Activated B cell treated with CpG ODN at 0.5 μM for 24 hours (primary cell): ENCODE measurements at regions of chr15 and their contacts with region 1.

Region 1: DNA sequence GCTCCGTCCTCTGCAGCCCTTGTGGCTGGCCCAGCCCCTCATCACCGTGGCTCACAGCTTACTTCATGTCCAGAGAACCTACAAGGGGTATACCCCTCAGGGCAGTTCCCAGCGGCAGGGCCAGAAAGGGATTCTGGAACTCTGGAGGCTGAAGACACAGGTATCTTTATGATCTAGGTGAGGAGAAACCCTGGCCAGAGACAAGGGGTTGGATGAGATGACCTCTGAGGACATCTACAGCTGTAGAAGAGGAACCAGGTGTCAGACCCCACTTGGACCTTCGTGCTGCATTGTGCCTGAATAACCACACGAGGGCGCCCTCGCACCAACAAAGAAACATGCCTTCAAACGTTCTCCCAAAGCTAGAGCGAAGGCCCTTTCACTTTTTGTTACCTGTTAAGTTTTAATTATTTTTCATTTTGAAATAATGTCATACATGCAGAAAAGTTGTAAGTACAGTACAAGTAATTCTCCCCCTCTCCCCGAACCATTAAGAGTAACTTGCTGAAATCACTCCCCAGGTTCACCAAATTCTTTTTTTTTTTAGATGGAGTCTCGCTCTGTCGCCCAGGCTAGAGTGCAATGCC is 118.7 kb upstream of the SMAD3 start:
- DNase-seq: peak; percentile 69
- ATAC-seq: peak; percentile 93
- H3K4me3 Mint-ChIP-seq: peak overlapping the region; percentile 17
- H3K27ac Mint-ChIP-seq: no peak overlapping the region
- H3K4me1 Mint-ChIP-seq: peaks cover 10% of the 10 kb centered on the region
- H3K27me3 Mint-ChIP-seq: peaks cover 9% of the 10 kb centered on the region
- CTCF ChIP-seq: no peak

Region 2: GRCh38 chr15:66997212-66997611 is 50.5 kb after region 1 on chr15:
- CTCF ChIA-PET with region 1: no interaction called
- POLR2A ChIA-PET with region 1: no interaction called
- intact Hi-C with region 1: no loop called
- DNase-seq: no peak
- ATAC-seq: no peak
- H3K4me3 Mint-ChIP-seq: no peak overlapping the region
- H3K27ac Mint-ChIP-seq: no peak overlapping the region
- H3K4me1 Mint-ChIP-seq: peaks cover 12% of the 10 kb centered on the region
- H3K27me3 Mint-ChIP-seq: no peaks in the 10 kb centered on the region
- CTCF ChIP-seq: no peak

Region 3: GRCh38 chr15:67181191-67181645 is 234.5 kb after region 1 on chr15:
- CTCF ChIA-PET with region 1: interaction called, 6 read pairs
- POLR2A ChIA-PET with region 1: no interaction called
- intact Hi-C with region 1: loop called (anchors 1 kb)
- DNase-seq: no peak
- ATAC-seq: peak; percentile 40
- H3K4me3 Mint-ChIP-seq: no peak overlapping the region
- H3K27ac Mint-ChIP-seq: no peak overlapping the region
- H3K4me1 Mint-ChIP-seq: peaks cover 15% of the 10 kb centered on the region
- H3K27me3 Mint-ChIP-seq: no peaks in the 10 kb centered on the region
- CTCF ChIP-seq: no peak

Region 4: DNA sequence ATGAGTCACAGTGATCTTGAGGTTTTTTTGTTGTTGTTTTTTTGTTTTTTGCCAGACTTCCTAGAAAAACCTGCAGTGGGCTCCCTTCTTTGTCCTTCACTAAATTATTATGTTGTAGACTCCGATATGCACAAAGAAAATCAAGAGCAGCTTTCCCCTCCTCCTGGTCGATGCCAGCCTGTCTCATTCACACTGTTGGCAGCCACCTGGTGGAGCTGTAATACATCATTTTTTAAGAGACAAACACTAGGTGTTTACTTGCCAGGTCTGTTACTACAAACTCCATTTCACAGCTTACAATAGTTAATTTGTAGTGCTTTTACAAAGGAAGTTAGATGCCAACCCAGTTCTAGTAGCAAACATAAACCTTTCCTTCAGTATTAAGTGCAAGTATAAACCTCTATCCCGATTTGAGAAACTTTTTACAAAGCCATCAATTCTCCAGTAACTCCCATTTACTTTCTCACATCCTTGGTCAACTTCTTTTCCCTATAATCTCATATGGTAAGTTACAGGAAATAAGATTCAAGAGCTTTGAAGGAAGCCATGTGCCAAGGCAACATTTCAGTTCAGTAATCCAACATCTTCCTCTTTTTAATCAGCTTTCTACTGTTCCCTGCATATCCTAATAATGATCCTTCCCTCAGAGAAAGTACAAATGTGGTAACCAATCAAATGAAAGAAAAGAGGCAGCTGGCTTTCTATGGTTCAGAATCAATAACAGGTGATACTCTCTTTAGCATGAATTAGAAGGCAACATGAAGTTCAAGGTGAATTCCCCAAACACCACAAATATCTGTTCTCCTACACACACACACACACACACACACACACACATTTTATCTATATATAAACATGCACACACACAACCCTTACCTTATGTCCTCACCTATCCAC is 293.8 kb after region 1 on chr15:
- CTCF ChIA-PET with region 1: interaction called, 8 read pairs
- POLR2A ChIA-PET with region 1: no interaction called
- intact Hi-C with region 1: loop called (anchors 5 kb)
- DNase-seq: no peak
- ATAC-seq: peak; percentile 9
- H3K4me3 Mint-ChIP-seq: peak overlapping the region; percentile 61
- H3K27ac Mint-ChIP-seq: peak overlapping the region; percentile 80
- H3K4me1 Mint-ChIP-seq: peaks cover 46% of the 10 kb centered on the region
- H3K27me3 Mint-ChIP-seq: no peaks in the 10 kb centered on the region
- CTCF ChIP-seq: no peak

Region 5: DNA sequence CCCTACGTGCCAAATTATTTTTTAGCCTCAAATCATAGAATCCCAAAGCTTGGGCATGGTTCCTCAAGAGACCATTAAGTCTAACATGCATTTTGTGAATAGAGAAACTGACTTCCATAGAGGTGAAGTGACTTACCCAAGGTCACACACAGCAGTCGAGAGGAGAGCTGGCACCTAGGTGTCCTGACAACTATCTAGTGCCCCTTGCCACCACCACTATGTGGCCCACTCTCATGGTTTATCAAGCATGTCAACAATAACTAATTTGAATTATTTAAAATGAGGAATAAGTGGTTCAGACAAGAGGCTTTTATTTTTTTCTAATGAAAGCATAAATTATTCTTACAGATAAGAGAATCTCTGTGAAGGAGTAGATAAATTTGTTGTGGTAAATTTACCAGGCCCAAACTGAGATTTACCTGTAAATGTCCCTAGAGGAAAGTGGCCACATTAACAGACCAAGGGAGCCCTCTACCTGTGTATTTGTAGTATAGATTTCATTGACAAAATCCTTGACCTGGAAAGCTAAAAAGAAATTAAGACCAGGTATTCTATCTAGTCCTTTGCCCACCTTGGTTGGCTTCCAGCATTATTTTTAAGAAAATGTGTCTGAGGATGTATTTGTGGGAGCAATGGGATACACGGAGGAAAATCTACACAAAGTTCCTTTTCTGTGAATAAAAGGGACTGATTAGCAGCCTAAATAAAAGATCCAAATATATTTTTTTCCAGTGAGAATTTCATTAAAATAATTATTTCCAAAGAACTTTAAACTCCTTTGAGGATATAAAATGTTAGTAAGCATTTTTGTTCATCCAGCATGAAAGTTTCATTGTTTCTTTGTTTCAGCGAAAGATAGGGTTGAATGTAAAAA is 357.1 kb after region 1 on chr15:
- CTCF ChIA-PET with region 1: interaction called, 102 read pairs
- POLR2A ChIA-PET with region 1: interaction called, 9 read pairs
- intact Hi-C with region 1: loop called (anchors 1 kb)
- DNase-seq: no peak
- ATAC-seq: peak; percentile 56
- H3K4me3 Mint-ChIP-seq: no peak overlapping the region
- H3K27ac Mint-ChIP-seq: no peak overlapping the region
- H3K4me1 Mint-ChIP-seq: no peaks in the 10 kb centered on the region
- H3K27me3 Mint-ChIP-seq: no peaks in the 10 kb centered on the region
- CTCF ChIP-seq: no peak

Region 6: GRCh38 chr15:67433495-67434099 is 486.9 kb after region 1 on chr15:
- CTCF ChIA-PET with region 1: interaction called, 55 read pairs
- POLR2A ChIA-PET with region 1: no interaction called
- intact Hi-C with region 1: loop called (anchors 1 kb)
- DNase-seq: no peak
- ATAC-seq: peak; percentile 50
- H3K4me3 Mint-ChIP-seq: no peak overlapping the region
- H3K27ac Mint-ChIP-seq: no peak overlapping the region
- H3K4me1 Mint-ChIP-seq: no peaks in the 10 kb centered on the region
- H3K27me3 Mint-ChIP-seq: peaks cover 3% of the 10 kb centered on the region
- CTCF ChIP-seq: no peak

Region 7: DNA sequence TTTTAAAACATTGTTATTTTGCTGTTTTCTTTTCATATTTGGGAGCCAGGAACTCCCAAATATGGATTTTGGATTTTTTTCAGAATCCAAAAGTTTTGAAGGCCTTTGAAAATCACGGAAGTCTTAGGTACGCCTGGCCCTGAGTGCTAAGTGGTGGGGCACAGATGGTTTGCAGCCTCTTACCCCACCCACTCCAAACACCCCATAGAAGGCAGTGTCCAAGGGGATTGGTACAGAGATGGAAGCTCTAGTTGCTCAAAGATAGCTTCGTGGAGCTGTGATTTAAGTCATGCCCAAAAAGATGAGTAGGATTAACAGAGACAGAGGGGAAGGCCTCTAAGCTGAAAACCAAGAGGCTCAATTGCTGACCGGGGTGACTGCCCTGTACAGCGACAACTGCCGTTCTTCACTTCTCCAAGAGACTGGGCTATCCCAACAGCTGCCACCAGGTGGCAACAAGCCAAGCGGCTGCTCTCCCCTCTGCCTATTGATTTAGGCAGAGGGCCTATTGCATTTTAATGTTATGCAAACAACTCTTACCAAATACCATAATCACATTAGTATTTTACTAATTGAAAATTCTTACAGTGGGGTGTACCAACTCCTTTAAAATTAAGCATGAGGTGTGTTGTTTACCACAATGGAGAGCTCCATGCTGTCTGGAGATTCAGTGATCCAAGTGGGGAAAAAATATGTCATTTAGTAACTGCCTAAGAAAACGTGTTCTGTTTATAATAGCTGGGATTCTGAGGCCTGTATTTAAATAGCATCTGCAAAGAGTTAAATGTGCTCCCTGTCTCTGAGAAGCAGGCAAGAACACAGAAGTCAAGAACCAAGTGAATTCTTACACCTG is 510.2 kb after region 1 on chr15:
- CTCF ChIA-PET with region 1: interaction called, 18 read pairs
- POLR2A ChIA-PET with region 1: no interaction called
- intact Hi-C with region 1: no loop called
- DNase-seq: peak; percentile 70
- ATAC-seq: peak; percentile 97
- H3K4me3 Mint-ChIP-seq: no peak overlapping the region
- H3K27ac Mint-ChIP-seq: no peak overlapping the region
- H3K4me1 Mint-ChIP-seq: no peaks in the 10 kb centered on the region
- H3K27me3 Mint-ChIP-seq: peaks cover 4% of the 10 kb centered on the region
- CTCF ChIP-seq: peak; percentile 85

Region 8: DNA sequence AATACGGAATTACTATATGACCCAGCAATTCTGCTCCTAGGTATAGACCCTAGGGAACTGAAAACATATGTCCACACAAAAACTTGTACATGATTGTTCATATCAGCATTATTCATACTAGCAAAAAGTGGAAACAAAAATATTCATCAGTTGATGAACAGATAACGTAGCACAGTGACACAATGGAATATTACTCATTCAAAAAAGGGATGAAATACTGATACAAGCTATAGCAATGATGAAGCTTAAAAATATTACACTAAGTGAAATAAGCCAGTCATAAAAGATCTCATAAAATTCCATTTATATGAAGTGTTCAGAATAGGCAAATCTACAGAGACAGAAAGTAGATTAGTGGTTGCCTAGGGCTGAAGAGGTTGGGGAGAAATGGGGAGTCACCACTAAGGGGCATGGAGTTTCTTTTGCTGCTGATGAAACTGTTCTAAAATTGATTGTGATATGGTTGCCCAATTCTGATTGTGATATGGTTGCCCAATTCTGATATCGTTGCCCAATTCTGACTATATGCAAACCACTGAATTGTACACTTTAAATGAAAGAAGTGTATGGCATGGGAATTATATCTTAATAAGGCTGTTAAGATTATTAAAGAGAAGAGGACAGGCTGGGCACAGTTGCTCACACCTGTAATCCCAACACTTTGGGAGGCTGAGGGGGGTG is 584.8 kb after region 1 on chr15:
- CTCF ChIA-PET with region 1: no interaction called
- POLR2A ChIA-PET with region 1: no interaction called
- intact Hi-C with region 1: no loop called
- DNase-seq: no peak
- ATAC-seq: no peak
- H3K4me3 Mint-ChIP-seq: no peak overlapping the region
- H3K27ac Mint-ChIP-seq: no peak overlapping the region
- H3K4me1 Mint-ChIP-seq: peaks cover 4% of the 10 kb centered on the region
- H3K27me3 Mint-ChIP-seq: peaks cover 6% of the 10 kb centered on the region
- CTCF ChIP-seq: no peak